Heart right ventricle (tissue), 16 donors: ENCODE measurements at regions of chr3 and their contacts with region 1.

Region 1: GRCh38 chr3:13895155-13896105 is 15.6 kb upstream of the WNT7A start:
- DNase-seq: peak; percentile 95 to 97
- ATAC-seq: peak; percentile 99
- H3K4me3 ChIP-seq: peak overlapping the region; percentile 43 to 77 (median 64)
- H3K27ac ChIP-seq: peak overlapping the region in 9 of 10 donors; percentile 4 to 83 (median 52)
- H3K4me1 ChIP-seq: peaks cover 6 to 31% (median 14%) of the 10 kb centered on the region in 9 donors
- H3K27me3 ChIP-seq: peaks cover 0 to 14% (median 0%) of the 10 kb centered on the region in 7 donors
- CTCF ChIP-seq: no peak

Region 2: DNA sequence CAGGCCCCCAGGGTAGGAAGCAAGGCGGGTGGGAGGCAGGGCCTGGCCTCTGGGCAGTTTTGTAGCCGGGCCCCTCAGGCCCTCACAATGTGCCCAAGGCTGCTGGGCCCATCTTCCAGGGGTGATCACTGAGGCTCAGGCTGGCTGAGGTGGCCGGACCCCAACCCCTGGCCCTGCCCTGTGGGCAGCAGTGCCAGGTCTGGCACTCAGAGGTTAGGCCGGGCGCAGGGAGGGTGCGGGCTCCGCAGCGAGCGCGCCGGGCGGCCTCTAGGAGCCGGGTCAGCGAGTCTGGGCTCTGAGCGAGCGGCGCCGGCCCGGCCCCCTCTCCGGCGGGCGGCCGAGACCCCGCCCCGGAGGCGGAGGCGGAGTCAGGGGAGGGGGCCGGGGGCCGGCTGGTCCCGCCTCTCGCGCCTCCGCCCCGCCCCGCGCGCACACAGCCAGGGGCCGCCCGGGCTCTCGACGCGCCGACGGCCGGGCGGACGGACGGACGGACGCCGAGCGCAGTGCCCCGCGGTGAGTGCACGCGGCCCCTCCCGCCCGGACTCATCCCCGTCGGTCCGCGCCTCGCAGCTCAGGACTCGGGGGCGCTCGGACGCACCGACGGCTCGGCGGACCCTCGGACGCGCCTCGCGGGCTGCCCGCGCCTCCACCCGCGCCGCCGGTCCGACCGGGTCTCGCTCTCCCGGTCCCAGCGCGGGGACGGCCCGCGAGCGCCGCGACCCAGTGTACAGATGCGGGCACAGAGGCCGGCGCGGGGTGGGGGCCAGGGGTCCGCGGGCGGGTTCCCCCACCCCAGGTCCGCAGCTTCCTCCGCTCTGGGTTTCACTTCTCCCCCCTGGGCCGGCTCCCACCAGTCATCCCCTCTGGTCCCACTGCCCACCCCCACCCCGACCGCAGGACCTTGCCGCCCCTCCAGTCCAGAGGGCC is 346.5 kb before region 1 on chr3 and contains the start of gene FBLN2:
- intact Hi-C with region 1: no loop called
- DNase-seq: peak in 1 of 2 donors; percentile 72
- ATAC-seq: peak; percentile 66 to 93 (median 78)
- H3K4me3 ChIP-seq: peak within 1 kb of the TSS in 9 of 10 donors; percentile 34 to 55 (median 52)
- H3K27ac ChIP-seq: peak within 1 kb of the TSS in 9 of 10 donors; percentile 56 to 90 (median 78)
- H3K4me1 ChIP-seq: peaks cover 14 to 67% (median 31%) of the 10 kb centered on the region in 9 donors
- H3K27me3 ChIP-seq: peaks cover 0 to 35% (median 17%) of the 10 kb centered on the region in 7 donors
- CTCF ChIP-seq: no peak
- total RNA-seq, gene FBLN2: 35.4 to 78.9 (median 47.0) TPM

Region 3: GRCh38 chr3:14031271-14031670 is 135.8 kb after region 1 on chr3:
- intact Hi-C with region 1: no loop called
- DNase-seq: no peak
- ATAC-seq: no peak
- H3K4me3 ChIP-seq: no peak overlapping the region
- H3K27ac ChIP-seq: no peak overlapping the region
- H3K4me1 ChIP-seq: no peaks in the 10 kb centered on the region
- H3K27me3 ChIP-seq: no peaks in the 10 kb centered on the region
- CTCF ChIP-seq: no peak

Region 4: DNA sequence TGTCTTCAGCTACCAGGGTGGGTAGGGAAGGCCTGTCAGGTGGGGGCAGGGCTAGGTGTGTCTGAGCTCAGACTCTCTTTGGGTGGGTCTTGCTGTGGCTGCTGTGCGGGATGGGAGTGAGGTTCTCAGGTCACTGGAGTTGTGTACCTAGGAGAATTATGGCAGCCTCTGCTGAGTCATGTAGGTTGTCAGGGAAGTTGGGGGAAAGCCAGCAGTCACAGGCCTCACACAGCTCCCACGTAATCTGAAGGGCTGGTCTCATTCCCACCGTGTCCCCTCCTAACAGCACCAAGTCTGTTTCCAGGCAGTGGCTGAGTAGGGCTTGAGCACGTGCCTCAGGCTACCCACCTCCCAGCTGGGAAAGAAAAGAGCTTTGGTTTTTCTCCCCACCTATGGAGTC is 162.3 kb after region 1 on chr3:
- intact Hi-C with region 1: no loop called
- DNase-seq: no peak
- ATAC-seq: no peak
- H3K4me3 ChIP-seq: no peak overlapping the region
- H3K27ac ChIP-seq: no peak overlapping the region
- H3K4me1 ChIP-seq: no peaks in the 10 kb centered on the region
- H3K27me3 ChIP-seq: peaks cover 0 to 8% (median 0%) of the 10 kb centered on the region in 7 donors
- CTCF ChIP-seq: no peak

Region 5: DNA sequence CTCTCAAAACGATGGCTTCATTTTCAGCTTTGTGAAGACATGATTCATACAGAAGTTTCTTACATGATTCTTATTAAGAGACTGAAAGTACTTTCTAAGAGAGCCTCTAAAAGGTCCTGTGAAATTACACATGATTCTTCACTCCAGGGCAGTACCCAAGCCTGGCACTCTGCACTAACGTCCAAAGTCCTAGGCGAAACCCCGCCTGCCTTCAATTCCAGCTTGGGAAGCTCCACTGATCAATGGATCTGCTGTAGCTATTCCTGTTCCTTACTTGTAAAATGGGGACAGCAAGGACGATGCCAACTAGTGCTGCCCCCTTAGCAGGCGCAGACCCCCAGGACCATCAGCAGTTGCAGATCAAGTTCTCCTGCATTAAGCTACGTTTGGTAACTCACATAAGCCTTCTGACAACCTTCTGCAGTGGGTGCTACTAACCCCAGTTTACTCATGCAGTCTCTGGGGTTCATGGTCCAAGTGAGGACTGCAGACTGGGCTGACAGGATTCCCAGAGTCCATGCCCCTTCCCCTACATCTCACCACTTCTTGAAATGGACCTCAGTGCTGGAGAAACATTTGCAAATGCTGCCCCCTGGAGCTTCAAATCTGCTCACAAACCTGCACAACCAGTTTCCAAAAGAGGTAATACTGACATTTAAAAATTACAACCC is 218.7 kb after region 1 on chr3:
- intact Hi-C with region 1: loop called in 3 of 10 experiments (anchors 5 to 10 kb)
- DNase-seq: no peak
- ATAC-seq: no peak
- H3K4me3 ChIP-seq: no peak overlapping the region
- H3K27ac ChIP-seq: no peak overlapping the region
- H3K4me1 ChIP-seq: peaks cover 0 to 12% (median 6%) of the 10 kb centered on the region in 9 donors
- H3K27me3 ChIP-seq: no peaks in the 10 kb centered on the region
- CTCF ChIP-seq: peak in 5 of 9 donors; percentile 6 to 36 (median 14)

Region 6: DNA sequence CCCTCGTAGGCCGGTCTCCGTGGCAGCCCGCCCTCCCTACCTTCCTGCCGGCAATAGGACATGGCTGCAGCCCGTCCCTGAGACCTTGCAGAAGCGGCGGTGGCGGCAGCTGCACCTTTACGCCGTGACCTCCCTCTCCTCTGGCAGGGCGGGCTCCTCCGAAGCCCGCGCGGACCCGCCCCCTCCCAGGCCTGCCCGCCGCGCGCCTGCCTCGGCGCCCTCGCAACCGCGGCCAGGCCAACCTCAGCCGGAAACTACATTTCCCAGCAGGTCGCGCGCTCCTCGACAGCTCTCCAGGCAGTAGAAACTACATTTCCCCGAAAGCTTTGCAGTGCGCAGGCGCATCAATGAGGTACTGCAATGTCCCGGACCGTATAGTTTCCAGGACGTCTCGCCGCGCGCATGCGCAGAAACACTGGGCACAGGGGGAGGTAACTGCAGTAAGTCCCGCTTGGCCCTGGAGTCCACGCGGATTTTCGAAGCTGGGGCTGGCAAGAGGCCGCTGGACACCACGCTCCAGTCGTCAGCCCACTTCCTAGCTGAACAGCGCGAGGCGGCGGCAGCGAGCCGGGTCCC is 229.3 kb after region 1 on chr3 and contains the starts of genes CHCHD4 and TMEM43:
- intact Hi-C with region 1: loop called in 8 of 10 experiments (anchors 1 to 10 kb)
- DNase-seq: peak; percentile 99
- ATAC-seq: peak; percentile 91 to 97 (median 95)
- H3K4me3 ChIP-seq: peak within 1 kb of the TSS; percentile 68 to 98 (median 81)
- H3K27ac ChIP-seq: peak within 1 kb of the TSS; percentile 78 to 97 (median 93)
- H3K4me1 ChIP-seq: peaks cover 7 to 47% (median 41%) of the 10 kb centered on the region in 9 donors
- H3K27me3 ChIP-seq: no peaks in the 10 kb centered on the region
- CTCF ChIP-seq: no peak
- total RNA-seq, gene CHCHD4: 18.0 to 37.2 (median 28.0) TPM
- total RNA-seq, gene TMEM43: 23.9 to 47.4 (median 37.2) TPM

Region 7: GRCh38 chr3:14170531-14171173 is 275.2 kb after region 1 on chr3:
- intact Hi-C with region 1: loop called in 2 of 10 experiments (anchors 5 to 10 kb)
- DNase-seq: no peak
- ATAC-seq: no peak
- H3K4me3 ChIP-seq: no peak overlapping the region
- H3K27ac ChIP-seq: no peak overlapping the region
- H3K4me1 ChIP-seq: peaks cover 0 to 14% (median 0%) of the 10 kb centered on the region in 9 donors
- H3K27me3 ChIP-seq: no peaks in the 10 kb centered on the region
- CTCF ChIP-seq: no peak

Region 8: DNA sequence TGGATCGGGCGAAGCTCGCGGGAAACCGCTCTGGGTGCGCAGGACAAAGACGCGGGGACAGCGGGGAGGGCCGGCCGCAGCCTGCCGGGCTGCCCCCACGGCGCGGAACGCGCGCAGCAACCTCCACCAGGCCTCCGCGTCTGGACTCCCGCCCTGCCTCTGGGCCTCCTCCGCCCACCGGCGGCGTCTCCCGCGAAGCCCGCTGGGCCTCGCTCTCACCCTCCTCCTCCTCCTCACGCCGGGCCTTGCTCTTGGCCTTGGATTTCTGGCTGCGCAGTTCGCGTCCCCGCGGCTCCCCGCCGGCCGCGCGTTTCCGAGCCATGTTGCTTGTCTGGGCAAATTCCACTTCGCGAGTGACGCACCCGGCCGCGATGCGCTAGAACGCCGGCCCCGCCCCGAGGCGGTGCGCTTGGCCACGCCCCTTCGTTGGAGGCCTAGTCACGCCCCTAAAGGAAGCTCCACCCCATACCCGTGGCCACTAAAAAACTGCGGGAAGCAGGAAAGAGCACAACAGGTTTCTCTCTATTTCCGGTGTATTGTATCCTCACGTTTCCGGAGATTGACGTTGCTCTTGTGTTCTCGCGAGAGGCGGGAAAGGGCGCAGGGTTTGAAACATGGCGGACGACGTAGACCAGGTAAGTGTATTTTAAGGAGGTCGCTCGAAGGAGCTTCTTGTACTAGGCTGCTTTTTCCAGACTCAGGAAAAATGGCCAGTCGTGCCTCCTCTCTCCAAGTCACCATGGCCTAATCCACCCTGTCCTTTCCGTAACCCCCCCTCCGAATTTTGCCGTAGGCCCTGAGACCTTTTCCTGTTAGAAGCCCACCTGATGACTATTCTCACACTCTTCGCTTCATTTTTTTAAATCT is 283.1 kb after region 1 on chr3 and contains the starts of genes LSM3 and XPC:
- intact Hi-C with region 1: loop called in 4 of 10 experiments (anchors 1 to 10 kb)
- DNase-seq: peak; percentile 97
- ATAC-seq: peak; percentile 99 to 100 (median 100)
- H3K4me3 ChIP-seq: peak within 1 kb of the TSS; percentile 54 to 87 (median 75)
- H3K27ac ChIP-seq: peak within 1 kb of the TSS; percentile 81 to 97 (median 94)
- H3K4me1 ChIP-seq: peaks cover 5 to 50% (median 29%) of the 10 kb centered on the region in 9 donors
- H3K27me3 ChIP-seq: no peaks in the 10 kb centered on the region
- CTCF ChIP-seq: no peak
- total RNA-seq, gene LSM3: 12.4 to 18.0 (median 15.2) TPM
- total RNA-seq, gene XPC: 8.5 to 15.8 (median 11.3) TPM

Region 9: GRCh38 chr3:14461748-14462324 is 566.4 kb after region 1 on chr3:
- intact Hi-C with region 1: loop called in 7 of 10 experiments (anchors 5 to 10 kb)
- DNase-seq: peak; percentile 51 to 59
- ATAC-seq: peak in 6 of 8 donors; percentile 35 to 74 (median 60)
- H3K4me3 ChIP-seq: no peak overlapping the region
- H3K27ac ChIP-seq: no peak overlapping the region
- H3K4me1 ChIP-seq: peaks cover 2 to 42% (median 25%) of the 10 kb centered on the region in 9 donors
- H3K27me3 ChIP-seq: peaks cover 0 to 37% (median 4%) of the 10 kb centered on the region in 7 donors
- CTCF ChIP-seq: peak in 8 of 9 donors; percentile 22 to 72 (median 55)

Region 10: DNA sequence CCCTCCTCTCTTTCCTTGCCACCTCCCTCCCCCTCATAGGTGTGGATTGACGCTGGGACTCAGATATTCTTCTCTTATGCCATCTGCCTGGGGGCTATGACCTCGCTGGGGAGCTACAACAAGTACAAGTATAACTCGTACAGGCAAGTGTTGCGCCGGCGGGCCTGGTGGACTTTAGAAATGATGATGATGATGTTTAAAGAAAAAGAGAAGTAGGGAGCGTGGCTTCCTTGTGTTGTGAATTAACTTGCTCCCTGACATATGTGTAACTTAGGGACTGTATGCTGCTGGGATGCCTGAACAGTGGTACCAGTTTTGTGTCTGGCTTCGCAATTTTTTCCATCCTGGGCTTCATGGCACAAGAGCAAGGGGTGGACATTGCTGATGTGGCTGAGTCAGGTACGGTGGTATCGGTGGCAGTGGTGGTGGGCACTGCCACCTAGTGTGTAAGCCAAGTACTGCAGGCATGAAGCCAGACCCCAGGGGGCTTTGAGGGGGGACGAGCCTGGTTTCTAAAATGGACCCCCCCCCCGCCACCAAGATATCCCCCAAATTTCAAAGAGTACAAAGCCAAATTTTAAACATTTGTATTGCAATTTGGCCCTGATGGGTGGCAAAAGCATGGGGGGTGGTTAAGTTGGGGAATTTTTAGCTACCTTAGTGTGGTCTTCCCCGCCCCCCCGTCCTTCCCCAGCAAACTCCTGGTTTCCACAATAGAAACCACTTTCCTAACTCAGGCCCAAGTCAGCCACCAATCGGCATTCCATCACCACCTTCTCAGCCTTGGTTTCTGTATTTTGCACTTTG is 572.6 kb after region 1 on chr3:
- intact Hi-C with region 1: loop called in 7 of 10 experiments (anchors 5 to 10 kb)
- DNase-seq: peak in 1 of 2 donors; percentile 40
- ATAC-seq: peak in 7 of 8 donors; percentile 44 to 78 (median 57)
- H3K4me3 ChIP-seq: no peak overlapping the region
- H3K27ac ChIP-seq: no peak overlapping the region
- H3K4me1 ChIP-seq: peaks cover 0 to 26% (median 2%) of the 10 kb centered on the region in 9 donors
- H3K27me3 ChIP-seq: peaks cover 0 to 28% (median 0%) of the 10 kb centered on the region in 7 donors
- CTCF ChIP-seq: peak; percentile 84 to 93 (median 88)